Esophagus squamous epithelium (tissue), 5 donors: ENCODE measurements at regions of chr12 and their contacts with region 1.

Region 1: GRCh38 chr12:59149997-59150642 is 229.8 kb upstream of the LRIG3 start:
- DNase-seq: no peak
- H3K4me3 ChIP-seq: no peak overlapping the region
- H3K27ac ChIP-seq: no peak overlapping the region
- H3K4me1 ChIP-seq: no peaks in the 10 kb centered on the region
- H3K27me3 ChIP-seq: no peaks in the 10 kb centered on the region
- CTCF ChIP-seq: peak; percentile 68 to 99 (median 94)
- POLR2A ChIP-seq: no peak

Region 2: DNA sequence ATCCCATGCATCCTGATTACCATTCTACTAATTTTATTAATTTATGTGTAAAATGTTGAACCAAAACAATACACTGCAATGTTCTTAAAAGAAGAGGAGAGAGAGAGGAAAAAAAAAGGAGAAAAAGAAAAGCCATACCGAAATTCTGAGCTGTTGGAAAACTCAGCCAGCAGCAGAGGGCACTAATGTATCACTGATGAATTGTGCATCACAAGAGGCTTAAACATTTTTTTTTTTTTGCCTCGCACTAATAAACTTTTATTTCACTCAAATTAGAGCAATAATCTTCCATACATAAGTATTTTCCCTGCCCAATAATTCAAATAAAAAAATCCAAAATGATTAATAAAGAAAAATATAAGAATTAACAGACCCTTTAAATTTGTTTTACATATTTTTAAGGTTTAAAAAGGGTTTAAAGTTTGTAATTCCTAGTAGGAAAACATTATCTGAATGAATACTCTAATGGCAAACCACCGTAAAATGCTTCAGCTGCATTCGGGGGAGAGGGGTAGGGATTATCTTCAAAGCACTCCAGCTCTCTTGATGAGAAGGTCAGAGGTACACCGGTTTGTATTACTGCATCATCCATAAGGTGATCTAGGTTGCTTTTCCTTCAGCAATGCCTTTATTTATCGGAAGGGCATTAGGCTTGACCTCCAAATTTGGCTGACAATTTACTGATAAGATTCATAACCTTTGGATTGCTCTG is 1166.8 kb before region 1 on chr12:
- intact Hi-C with region 1: loop called (anchors 10 kb)
- DNase-seq: no peak
- H3K4me3 ChIP-seq: no peak overlapping the region
- H3K27ac ChIP-seq: no peak overlapping the region
- H3K4me1 ChIP-seq: peaks cover 0 to 13% (median 5%) of the 10 kb centered on the region in 3 donors
- H3K27me3 ChIP-seq: no peaks in the 10 kb centered on the region
- CTCF ChIP-seq: peak; percentile 29 to 79 (median 64)
- POLR2A ChIP-seq: no peak

Region 3: GRCh38 chr12:58540480-58541299 is 609.4 kb before region 1 on chr12:
- intact Hi-C with region 1: loop called (anchors 10 kb)
- DNase-seq: no peak
- H3K4me3 ChIP-seq: no peak overlapping the region
- H3K27ac ChIP-seq: peak overlapping the region in 2 of 4 donors; percentile 13 to 31
- H3K4me1 ChIP-seq: peaks cover 0 to 43% (median 7%) of the 10 kb centered on the region in 3 donors
- H3K27me3 ChIP-seq: no peaks in the 10 kb centered on the region
- CTCF ChIP-seq: peak; percentile 51 to 84 (median 69)
- POLR2A ChIP-seq: no peak

Region 4: GRCh38 chr12:59484575-59484974 is 334.5 kb after region 1 on chr12:
- intact Hi-C with region 1: no loop called
- DNase-seq: no peak
- H3K4me3 ChIP-seq: no peak overlapping the region
- H3K27ac ChIP-seq: no peak overlapping the region
- H3K4me1 ChIP-seq: no peaks in the 10 kb centered on the region
- H3K27me3 ChIP-seq: no peaks in the 10 kb centered on the region
- CTCF ChIP-seq: no peak
- POLR2A ChIP-seq: no peak

Region 5: GRCh38 chr12:59708064-59708463 is 557.9 kb after region 1 on chr12:
- intact Hi-C with region 1: no loop called
- DNase-seq: no peak
- H3K4me3 ChIP-seq: no peak overlapping the region
- H3K27ac ChIP-seq: no peak overlapping the region
- H3K4me1 ChIP-seq: peaks cover 0 to 5% (median 0%) of the 10 kb centered on the region in 3 donors
- H3K27me3 ChIP-seq: no peaks in the 10 kb centered on the region
- CTCF ChIP-seq: no peak
- POLR2A ChIP-seq: no peak